CD4-positive, alpha-beta T cell (primary cell): ENCODE measurements at regions of chr9 and their contacts with region 1.

Region 1: GRCh38 chr9:94870793-94871558 is 144.5 kb downstream of the AOPEP start:
- DNase-seq: peak in 12 of 14 experiments; percentile 9 to 91 (median 36)
- ATAC-seq: peak; percentile 89
- H3K4me3 ChIP-seq: no peak overlapping the region
- H3K4me3 Mint-ChIP-seq: peak overlapping the region; percentile 76
- H3K27ac ChIP-seq: peak overlapping the region; percentile 42 to 45
- H3K27ac Mint-ChIP-seq: peak overlapping the region; percentile 80
- H3K4me1 ChIP-seq: peaks cover 25% of the 10 kb centered on the region
- H3K4me1 Mint-ChIP-seq: peaks cover 30% of the 10 kb centered on the region
- H3K27me3 ChIP-seq: no peaks in the 10 kb centered on the region
- H3K27me3 Mint-ChIP-seq: no peaks in the 10 kb centered on the region
- CTCF ChIP-seq: no peak

Region 2: DNA sequence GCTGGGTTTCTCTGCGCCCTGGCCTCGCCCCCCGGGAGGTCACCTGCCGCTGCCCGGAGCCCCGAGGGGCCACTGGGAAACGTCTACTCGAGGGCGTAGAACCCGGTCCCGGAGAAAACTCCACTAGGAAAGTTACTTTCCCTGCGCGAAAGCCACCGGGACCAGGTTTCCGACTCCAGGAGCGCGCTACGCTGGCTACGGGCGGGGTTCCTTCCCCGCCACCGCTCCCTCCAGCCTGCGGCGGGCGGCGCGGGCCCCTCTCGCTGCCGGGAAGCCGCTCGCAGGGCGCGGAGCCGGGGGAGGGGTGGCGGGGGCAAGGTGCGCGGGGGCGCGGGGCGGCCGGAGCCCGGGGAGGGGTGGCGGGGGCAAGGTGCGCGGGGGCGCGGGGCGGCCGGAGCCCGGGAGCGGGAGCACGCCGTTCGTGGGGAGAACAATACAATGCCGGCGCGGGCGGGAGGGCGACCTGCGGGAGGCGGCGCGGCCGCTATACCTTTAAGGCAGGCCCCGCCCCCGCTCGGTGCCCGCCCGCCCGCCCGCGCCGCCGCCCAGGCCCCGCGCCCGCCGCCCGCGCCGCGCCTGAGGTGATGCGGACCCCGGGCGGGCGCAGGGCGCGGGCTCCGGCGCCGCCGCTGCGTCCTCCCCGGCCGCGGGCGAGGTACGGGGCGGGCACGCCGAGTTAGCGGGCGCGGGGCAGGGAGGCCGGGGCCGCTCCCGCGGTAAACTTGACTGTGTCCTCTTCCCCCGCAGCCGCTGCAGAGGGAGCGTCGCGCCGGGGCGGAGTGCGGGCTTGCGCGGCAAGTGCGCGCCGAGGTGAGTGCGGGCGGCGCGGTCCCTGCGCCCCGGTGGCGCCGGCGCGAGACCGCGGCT is 133.7 kb after region 1 on chr9:
- CTCF ChIA-PET with region 1: no interaction called
- POLR2A ChIA-PET with region 1: no interaction called
- intact Hi-C with region 1: loop called in 1 of 2 experiments (anchors 10 kb)
- DNase-seq: peak in 7 of 14 experiments; percentile 6 to 52 (median 25)
- ATAC-seq: peak; percentile 70
- H3K4me3 ChIP-seq: peak overlapping the region; percentile 48
- H3K4me3 Mint-ChIP-seq: no peak overlapping the region
- H3K27ac ChIP-seq: no peak overlapping the region
- H3K27ac Mint-ChIP-seq: no peak overlapping the region
- H3K4me1 ChIP-seq: peaks cover 10% of the 10 kb centered on the region
- H3K4me1 Mint-ChIP-seq: peaks cover 14% of the 10 kb centered on the region
- H3K27me3 ChIP-seq: peaks cover 12 to 45% of the 10 kb centered on the region in 2 experiments
- H3K27me3 Mint-ChIP-seq: peaks cover 48% of the 10 kb centered on the region
- CTCF ChIP-seq: no peak